B cell (primary cell): ENCODE measurements at regions of chr6 and their contacts with region 1.

Region 1: GRCh38 chr6:109095027-109095834 is at the start of gene CEP57L1:
- DNase-seq: peak; percentile 97
- ATAC-seq: peak; percentile 67
- H3K4me3 ChIP-seq: peak within 1 kb of the TSS; percentile 69 to 98 (median 85)
- H3K4me3 Mint-ChIP-seq: peak within 1 kb of the TSS; percentile 99
- H3K27ac ChIP-seq: peak within 1 kb of the TSS; percentile 95 to 98
- H3K27ac Mint-ChIP-seq: peak within 1 kb of the TSS; percentile 100
- H3K4me1 ChIP-seq: peaks cover 28 to 29% of the 10 kb centered on the region in 2 donors
- H3K4me1 Mint-ChIP-seq: peaks cover 44% of the 10 kb centered on the region
- H3K27me3 ChIP-seq: no peaks in the 10 kb centered on the region
- H3K27me3 Mint-ChIP-seq: no peaks in the 10 kb centered on the region
- CTCF ChIP-seq: no peak
- total RNA-seq, gene CEP57L1: 7.7 and 8.8 TPM in 2 replicates

Region 2: DNA sequence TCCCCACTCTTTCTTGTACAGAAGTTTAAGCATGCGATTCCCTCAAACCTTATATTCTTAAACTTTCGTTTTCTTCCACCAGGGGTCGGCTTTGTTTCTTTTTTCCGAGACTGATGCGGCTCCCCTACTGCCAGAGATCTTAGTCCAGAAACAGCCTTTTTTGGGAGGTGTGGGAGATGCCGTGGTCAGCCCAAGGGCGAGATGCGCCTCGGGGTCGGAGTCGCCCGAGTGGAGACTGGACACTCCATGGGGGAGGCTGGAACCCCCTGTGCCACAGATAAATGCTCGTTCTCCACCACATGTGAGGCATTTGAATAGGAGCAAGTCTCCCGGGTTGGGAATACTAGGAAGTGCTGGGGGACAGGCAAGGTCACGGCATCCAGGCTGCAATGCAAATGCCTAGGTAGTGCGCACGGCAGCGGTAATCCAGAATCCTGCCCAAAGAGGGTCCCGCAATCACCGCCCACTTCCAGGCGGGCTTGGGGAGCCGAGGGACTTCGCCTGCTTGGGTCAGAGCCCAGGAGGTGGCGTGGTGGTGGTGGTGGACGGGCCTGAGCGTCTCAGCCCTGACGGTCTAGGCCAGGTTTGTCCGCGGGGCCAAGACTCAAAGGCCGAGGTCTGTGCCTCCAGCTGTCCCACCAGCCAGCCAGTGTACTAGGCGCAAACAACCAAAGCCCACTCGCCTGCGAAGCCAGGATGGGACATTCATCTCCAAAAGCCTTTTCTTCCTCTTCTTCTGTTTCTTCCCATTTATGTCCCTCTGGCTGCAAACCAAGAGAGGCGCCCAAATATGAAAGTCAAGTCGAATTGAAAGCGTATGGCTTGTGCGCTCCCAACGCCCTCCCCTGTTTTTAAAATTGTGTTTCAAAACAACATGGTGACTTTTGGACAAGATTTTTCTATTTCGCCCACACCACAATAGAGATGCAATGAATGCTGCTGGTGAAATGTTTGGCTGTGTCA is 981.4 kb before region 1 on chr6:
- CTCF ChIA-PET with region 1: no interaction called
- POLR2A ChIA-PET with region 1: no interaction called
- intact Hi-C with region 1: loop called (anchors 5 kb)
- DNase-seq: peak; percentile 72
- ATAC-seq: no peak
- H3K4me3 ChIP-seq: peak overlapping the region in 2 of 5 experiments; percentile 15 to 31
- H3K4me3 Mint-ChIP-seq: peak overlapping the region; percentile 85
- H3K27ac ChIP-seq: no peak overlapping the region
- H3K27ac Mint-ChIP-seq: no peak overlapping the region
- H3K4me1 ChIP-seq: peaks cover 45 to 51% of the 10 kb centered on the region in 2 donors
- H3K4me1 Mint-ChIP-seq: peaks cover 44% of the 10 kb centered on the region
- H3K27me3 ChIP-seq: peaks cover 0 to 72% (median 63%) of the 10 kb centered on the region in 4 experiments
- H3K27me3 Mint-ChIP-seq: peaks cover 71% of the 10 kb centered on the region
- CTCF ChIP-seq: peak; percentile 74

Region 3: GRCh38 chr6:108558372-108559096 is 536.7 kb before region 1 on chr6:
- CTCF ChIA-PET with region 1: interaction called, 3 read pairs
- POLR2A ChIA-PET with region 1: interaction called, 17 read pairs
- intact Hi-C with region 1: loop called (anchors 1 kb)
- DNase-seq: peak; percentile 99
- ATAC-seq: peak; percentile 64
- H3K4me3 ChIP-seq: peak overlapping the region; percentile 83 to 98 (median 96)
- H3K4me3 Mint-ChIP-seq: peak overlapping the region; percentile 100
- H3K27ac ChIP-seq: peak overlapping the region; percentile 100
- H3K27ac Mint-ChIP-seq: peak overlapping the region; percentile 100
- H3K4me1 ChIP-seq: peaks cover 17 to 20% of the 10 kb centered on the region in 2 donors
- H3K4me1 Mint-ChIP-seq: peaks cover 22% of the 10 kb centered on the region
- H3K27me3 ChIP-seq: peaks cover 0 to 6% (median 0%) of the 10 kb centered on the region in 4 experiments
- H3K27me3 Mint-ChIP-seq: peaks cover 5% of the 10 kb centered on the region
- CTCF ChIP-seq: no peak

Region 4: DNA sequence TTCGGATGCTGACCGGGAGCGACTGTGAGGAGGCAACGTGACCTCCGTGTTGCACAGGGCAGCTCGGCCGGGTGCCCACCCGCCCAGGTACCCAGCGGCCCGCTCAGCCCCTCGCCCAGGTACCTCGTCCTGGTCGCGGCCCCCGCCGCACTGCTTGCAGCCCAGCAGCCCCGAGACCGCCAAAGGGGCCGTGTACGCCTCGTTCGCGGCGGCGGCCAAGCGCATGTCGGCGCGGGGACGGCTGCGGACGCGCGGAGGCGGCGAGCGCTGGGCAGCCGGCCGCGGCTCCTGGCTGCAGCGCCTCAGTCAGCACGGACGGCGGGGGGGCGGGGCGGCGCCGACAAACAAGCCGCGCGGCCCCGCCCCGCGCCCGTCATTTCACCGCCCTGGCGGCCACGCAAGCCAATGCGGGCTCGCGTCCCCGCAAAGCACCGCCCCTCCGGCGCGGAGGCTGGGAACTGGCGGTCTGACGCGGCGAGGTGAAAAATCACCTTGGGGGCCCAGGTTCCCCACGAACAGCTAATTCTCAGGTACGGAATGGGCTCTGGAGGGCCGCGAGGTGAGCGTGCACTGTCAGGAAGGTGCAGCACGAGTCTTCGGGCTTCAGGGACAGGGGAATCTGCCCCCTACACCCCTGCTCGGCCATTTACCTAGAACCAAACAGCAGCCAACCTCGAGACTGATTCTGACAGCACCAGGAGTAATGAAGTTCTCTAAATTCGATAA is 85.8 kb before region 1 on chr6:
- CTCF ChIA-PET with region 1: no interaction called
- POLR2A ChIA-PET with region 1: interaction called, 3 read pairs
- intact Hi-C with region 1: loop called (anchors 1 kb)
- DNase-seq: peak; percentile 94
- ATAC-seq: peak; percentile 98
- H3K4me3 ChIP-seq: peak overlapping the region; percentile 77 to 97 (median 89)
- H3K4me3 Mint-ChIP-seq: peak overlapping the region; percentile 98
- H3K27ac ChIP-seq: peak overlapping the region; percentile 87 to 90
- H3K27ac Mint-ChIP-seq: peak overlapping the region; percentile 97
- H3K4me1 ChIP-seq: peaks cover 32 to 52% of the 10 kb centered on the region in 2 donors
- H3K4me1 Mint-ChIP-seq: peaks cover 64% of the 10 kb centered on the region
- H3K27me3 ChIP-seq: no peaks in the 10 kb centered on the region
- H3K27me3 Mint-ChIP-seq: no peaks in the 10 kb centered on the region
- CTCF ChIP-seq: no peak

Region 5: DNA sequence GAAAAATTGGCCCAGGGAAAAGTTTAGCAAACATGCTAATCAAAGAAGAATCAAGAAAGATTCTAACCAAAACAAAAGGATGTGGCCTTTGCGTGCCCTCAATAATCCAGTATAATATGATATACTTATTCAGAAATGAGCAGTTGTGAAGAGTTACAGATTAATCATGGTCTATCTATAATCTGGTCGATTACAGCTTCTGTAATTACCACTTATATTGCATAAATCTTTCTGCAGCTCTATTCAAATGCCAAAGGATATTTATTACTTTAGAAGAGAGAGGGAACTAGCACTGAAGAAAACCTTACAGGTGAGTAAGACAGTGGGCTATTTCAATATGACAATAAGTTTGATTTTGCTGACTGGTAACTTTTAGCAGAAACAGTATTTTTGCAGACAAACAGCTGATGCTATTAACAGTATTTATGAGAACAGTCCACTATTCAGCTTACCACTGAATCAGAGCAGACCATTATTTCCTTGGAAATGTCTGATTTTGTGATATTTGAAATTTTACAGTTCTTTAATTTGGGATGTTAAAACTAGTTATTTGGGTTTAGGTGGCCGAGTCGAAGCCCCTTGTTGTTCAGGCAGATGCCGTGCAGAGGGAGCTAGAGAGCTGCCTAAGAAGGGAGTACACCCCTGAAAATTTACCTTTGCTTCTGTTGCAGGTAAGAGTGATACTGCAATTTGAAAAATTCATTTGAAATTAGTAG is 92.3 kb after region 1 on chr6:
- CTCF ChIA-PET with region 1: no interaction called
- POLR2A ChIA-PET with region 1: no interaction called
- intact Hi-C with region 1: loop called (anchors 10 kb)
- DNase-seq: peak; percentile 71
- ATAC-seq: peak; percentile 82
- H3K4me3 ChIP-seq: no peak overlapping the region
- H3K4me3 Mint-ChIP-seq: no peak overlapping the region
- H3K27ac ChIP-seq: no peak overlapping the region
- H3K27ac Mint-ChIP-seq: no peak overlapping the region
- H3K4me1 ChIP-seq: peaks cover 8 to 16% of the 10 kb centered on the region in 2 donors
- H3K4me1 Mint-ChIP-seq: peaks cover 9% of the 10 kb centered on the region
- H3K27me3 ChIP-seq: peaks cover 0 to 4% (median 0%) of the 10 kb centered on the region in 4 experiments
- H3K27me3 Mint-ChIP-seq: peaks cover 11% of the 10 kb centered on the region
- CTCF ChIP-seq: peak; percentile 97

Region 6: GRCh38 chr6:109455502-109456282 is 360.5 kb after region 1 on chr6 and contains the start of gene MICAL1:
- CTCF ChIA-PET with region 1: no interaction called
- POLR2A ChIA-PET with region 1: interaction called, 5 read pairs
- intact Hi-C with region 1: loop called (anchors 2 kb)
- DNase-seq: peak; percentile 94
- ATAC-seq: peak; percentile 61
- H3K4me3 ChIP-seq: peak within 1 kb of the TSS; percentile 73 to 99 (median 93)
- H3K4me3 Mint-ChIP-seq: peak within 1 kb of the TSS; percentile 95
- H3K27ac ChIP-seq: peak within 1 kb of the TSS; percentile 98 to 99
- H3K27ac Mint-ChIP-seq: peak within 1 kb of the TSS; percentile 99
- H3K4me1 ChIP-seq: peaks cover 82 to 83% of the 10 kb centered on the region in 2 donors
- H3K4me1 Mint-ChIP-seq: peaks cover 82% of the 10 kb centered on the region
- H3K27me3 ChIP-seq: no peaks in the 10 kb centered on the region
- H3K27me3 Mint-ChIP-seq: no peaks in the 10 kb centered on the region
- CTCF ChIP-seq: peak; percentile 53
- total RNA-seq, gene MICAL1: 202 TPM in 2 replicates